Activated B cell treated with CpG ODN at 0.5 μM for 24 hours (primary cell): ENCODE measurements at regions of chr2 and their contacts with region 1.

Region 1: DNA sequence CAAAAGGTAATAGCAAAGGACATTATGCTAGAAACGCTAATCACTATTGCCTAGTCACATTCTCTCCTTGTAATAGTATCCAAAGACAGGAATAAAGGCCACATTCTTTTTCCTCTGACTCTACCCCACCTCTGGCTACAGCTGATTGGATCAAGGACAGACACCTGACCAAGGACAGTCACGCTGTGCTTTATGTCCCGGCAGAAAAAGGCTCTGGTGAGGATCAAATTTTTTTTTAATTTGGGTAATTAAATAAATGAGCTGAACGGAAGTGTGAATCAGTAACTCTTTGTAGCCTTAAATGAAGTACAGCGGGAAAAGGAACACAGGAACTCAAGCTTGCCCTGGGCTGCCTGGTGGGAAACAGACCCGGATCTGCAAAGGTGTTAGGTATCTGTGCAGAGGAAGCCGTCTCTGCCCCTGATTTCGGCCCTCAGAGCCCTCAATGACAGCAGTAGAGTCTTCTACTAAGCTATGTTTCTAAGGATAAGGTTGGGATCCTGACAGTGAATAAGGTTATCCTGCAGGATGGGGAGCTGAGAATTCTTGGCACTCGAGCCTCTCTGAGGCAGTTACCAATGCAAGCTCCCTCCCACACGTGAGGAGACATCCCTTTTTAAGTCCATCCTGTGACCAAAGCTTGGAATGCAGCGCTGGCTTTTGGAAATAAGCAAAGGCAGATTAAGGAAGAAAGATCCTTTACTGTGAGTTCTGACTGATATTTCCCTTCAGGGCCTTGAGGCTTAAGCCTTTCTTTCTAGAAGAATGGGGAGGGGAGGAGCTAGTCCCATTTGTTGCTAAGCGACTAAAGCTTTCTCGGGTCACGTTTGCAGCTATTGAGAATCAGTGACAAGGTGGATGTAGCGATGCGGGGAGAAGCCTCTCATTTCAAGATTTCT is 37.8 kb upstream of the IKZF2 start:
- DNase-seq: no peak
- ATAC-seq: peak; percentile 71
- H3K4me3 Mint-ChIP-seq: no peak overlapping the region
- H3K27ac Mint-ChIP-seq: no peak overlapping the region
- H3K4me1 Mint-ChIP-seq: peaks cover 13% of the 10 kb centered on the region
- H3K27me3 Mint-ChIP-seq: no peaks in the 10 kb centered on the region
- CTCF ChIP-seq: no peak

Region 2: GRCh38 chr2:213166109-213166508 is 23.1 kb before region 1 on chr2:
- CTCF ChIA-PET with region 1: no interaction called
- POLR2A ChIA-PET with region 1: interaction called, 4 read pairs
- intact Hi-C with region 1: loop called (anchors 2 kb)
- DNase-seq: no peak
- ATAC-seq: peak; percentile 86
- H3K4me3 Mint-ChIP-seq: peak overlapping the region; percentile 30
- H3K27ac Mint-ChIP-seq: peak overlapping the region; percentile 93
- H3K4me1 Mint-ChIP-seq: peaks cover 40% of the 10 kb centered on the region
- H3K27me3 Mint-ChIP-seq: no peaks in the 10 kb centered on the region
- CTCF ChIP-seq: no peak

Region 3: DNA sequence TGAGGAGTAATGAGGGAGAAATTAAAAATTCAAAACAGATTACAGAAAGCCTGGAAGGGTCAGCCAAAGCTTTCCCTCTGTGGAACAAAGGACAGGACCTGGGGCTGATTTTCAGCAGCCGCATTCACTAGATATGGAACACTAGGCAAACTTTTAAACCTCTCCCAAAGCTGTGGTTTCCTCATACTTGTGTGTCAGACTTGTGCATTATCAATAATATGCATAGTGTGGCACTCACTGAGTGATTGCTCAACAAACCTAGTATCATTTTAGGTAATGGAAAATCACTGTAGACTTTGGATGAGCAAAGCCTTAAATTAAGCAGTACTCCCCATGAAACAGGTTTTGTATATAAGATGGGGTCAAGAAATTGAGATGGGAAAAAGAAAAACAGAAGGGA is 11.6 kb before region 1 on chr2:
- CTCF ChIA-PET with region 1: no interaction called
- POLR2A ChIA-PET with region 1: no interaction called
- intact Hi-C with region 1: loop called (anchors 2 kb)
- DNase-seq: no peak
- ATAC-seq: no peak
- H3K4me3 Mint-ChIP-seq: no peak overlapping the region
- H3K27ac Mint-ChIP-seq: no peak overlapping the region
- H3K4me1 Mint-ChIP-seq: peaks cover under 1% of the 10 kb centered on the region
- H3K27me3 Mint-ChIP-seq: no peaks in the 10 kb centered on the region
- CTCF ChIP-seq: no peak

Region 4: DNA sequence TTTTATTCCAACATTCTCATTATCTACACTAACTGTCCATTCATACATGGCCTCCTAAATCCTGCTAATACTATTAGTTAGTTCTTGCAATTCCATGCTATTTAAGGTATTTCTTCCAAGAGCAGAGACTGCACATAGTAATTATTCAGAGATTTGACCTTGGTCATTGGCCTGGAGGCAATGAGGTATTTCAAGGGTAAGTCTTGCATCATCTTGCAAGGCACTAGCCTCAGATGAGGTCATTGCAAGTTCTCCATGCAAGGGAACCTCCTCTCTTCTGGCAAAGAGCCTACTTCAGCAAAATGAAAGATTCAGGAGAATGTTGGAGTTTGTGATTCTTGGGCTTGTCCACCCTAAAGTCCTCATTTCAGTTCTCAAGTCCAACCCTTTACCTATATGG is 10.6 kb after region 1 on chr2:
- CTCF ChIA-PET with region 1: no interaction called
- POLR2A ChIA-PET with region 1: no interaction called
- intact Hi-C with region 1: loop called (anchors 2 kb)
- DNase-seq: no peak
- ATAC-seq: no peak
- H3K4me3 Mint-ChIP-seq: no peak overlapping the region
- H3K27ac Mint-ChIP-seq: no peak overlapping the region
- H3K4me1 Mint-ChIP-seq: peaks cover 22% of the 10 kb centered on the region
- H3K27me3 Mint-ChIP-seq: no peaks in the 10 kb centered on the region
- CTCF ChIP-seq: no peak